Activated naive CD4-positive, alpha-beta T cell treated with anti-CD3 and anti-CD28 coated beads for 36 hours (primary cell): ENCODE measurements at regions of chr1 and their contacts with region 1.

Region 1: GRCh38 chr1:198520524-198521254 is 19.8 kb downstream of the ATP6V1G3 start:
- DNase-seq: peak; percentile 21
- H3K4me3 Mint-ChIP-seq: peak overlapping the region; percentile 75
- H3K27ac Mint-ChIP-seq: peak overlapping the region; percentile 92
- H3K4me1 Mint-ChIP-seq: peaks cover 57% of the 10 kb centered on the region
- H3K27me3 Mint-ChIP-seq: no peaks in the 10 kb centered on the region

Region 2: GRCh38 chr1:197775282-197776262 is 745.1 kb before region 1 on chr1 and contains the start of gene DENND1B:
- CTCF ChIA-PET with region 1: no interaction called
- intact Hi-C with region 1: loop called (anchors 2 kb)
- DNase-seq: peak; percentile 84
- H3K4me3 Mint-ChIP-seq: peak within 1 kb of the TSS; percentile 74
- H3K27ac Mint-ChIP-seq: peak within 1 kb of the TSS; percentile 99
- H3K4me1 Mint-ChIP-seq: peaks cover 64% of the 10 kb centered on the region
- H3K27me3 Mint-ChIP-seq: no peaks in the 10 kb centered on the region
- total RNA-seq, gene DENND1B: 8.9 to 9.7 TPM

Region 3: GRCh38 chr1:198497346-198498102 is 23.2 kb before region 1 on chr1:
- CTCF ChIA-PET with region 1: no interaction called
- intact Hi-C with region 1: loop called (anchors 1 kb)
- DNase-seq: no peak
- H3K4me3 Mint-ChIP-seq: no peak overlapping the region
- H3K27ac Mint-ChIP-seq: no peak overlapping the region
- H3K4me1 Mint-ChIP-seq: peaks cover 14% of the 10 kb centered on the region
- H3K27me3 Mint-ChIP-seq: no peaks in the 10 kb centered on the region

Region 4: GRCh38 chr1:198620951-198621824 is 100.5 kb after region 1 on chr1:
- CTCF ChIA-PET with region 1: interaction called, 4 read pairs
- intact Hi-C with region 1: loop called (anchors 1 kb)
- DNase-seq: peak; percentile 77
- H3K4me3 Mint-ChIP-seq: peak overlapping the region; percentile 82
- H3K27ac Mint-ChIP-seq: peak overlapping the region; percentile 100
- H3K4me1 Mint-ChIP-seq: peaks cover 86% of the 10 kb centered on the region
- H3K27me3 Mint-ChIP-seq: no peaks in the 10 kb centered on the region

Region 5: GRCh38 chr1:198749279-198749678 is 228.6 kb after region 1 on chr1:
- CTCF ChIA-PET with region 1: no interaction called
- intact Hi-C with region 1: loop called (anchors 2 kb)
- DNase-seq: no peak
- H3K4me3 Mint-ChIP-seq: no peak overlapping the region
- H3K27ac Mint-ChIP-seq: peak overlapping the region; percentile 9
- H3K4me1 Mint-ChIP-seq: peaks cover 16% of the 10 kb centered on the region
- H3K27me3 Mint-ChIP-seq: no peaks in the 10 kb centered on the region

Region 6: DNA sequence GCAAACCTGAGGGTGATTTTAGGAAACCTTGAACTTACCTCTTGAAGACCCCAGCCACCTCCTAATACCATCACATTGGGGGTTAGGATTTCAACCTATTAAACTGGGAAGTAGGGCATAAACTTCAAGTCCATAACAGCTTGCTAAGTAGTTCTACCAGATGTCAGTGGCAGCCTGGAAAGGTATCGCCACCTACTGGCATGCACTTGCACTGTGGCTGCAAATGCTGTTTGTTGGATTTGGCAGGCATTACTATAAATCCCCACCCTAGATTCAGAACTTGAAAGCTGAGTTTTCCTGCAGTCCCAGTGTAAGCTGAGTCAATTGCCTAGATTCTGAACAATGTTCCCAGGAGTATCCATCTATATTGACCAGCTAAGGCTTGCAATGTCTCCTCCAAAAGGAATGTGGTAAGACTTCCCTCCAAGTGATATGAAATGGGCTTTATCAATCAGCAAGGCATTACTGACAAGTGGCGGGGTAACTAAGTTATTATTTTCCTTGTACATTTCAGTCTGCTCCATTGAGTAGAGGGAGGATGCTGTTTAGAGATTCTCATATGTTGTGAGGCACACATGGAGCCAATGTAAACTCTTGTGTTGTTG is 592.7 kb after region 1 on chr1:
- CTCF ChIA-PET with region 1: no interaction called
- intact Hi-C with region 1: loop called (anchors 2 kb)
- DNase-seq: peak; percentile 87
- H3K4me3 Mint-ChIP-seq: no peak overlapping the region
- H3K27ac Mint-ChIP-seq: no peak overlapping the region
- H3K4me1 Mint-ChIP-seq: no peaks in the 10 kb centered on the region
- H3K27me3 Mint-ChIP-seq: no peaks in the 10 kb centered on the region

Region 7: DNA sequence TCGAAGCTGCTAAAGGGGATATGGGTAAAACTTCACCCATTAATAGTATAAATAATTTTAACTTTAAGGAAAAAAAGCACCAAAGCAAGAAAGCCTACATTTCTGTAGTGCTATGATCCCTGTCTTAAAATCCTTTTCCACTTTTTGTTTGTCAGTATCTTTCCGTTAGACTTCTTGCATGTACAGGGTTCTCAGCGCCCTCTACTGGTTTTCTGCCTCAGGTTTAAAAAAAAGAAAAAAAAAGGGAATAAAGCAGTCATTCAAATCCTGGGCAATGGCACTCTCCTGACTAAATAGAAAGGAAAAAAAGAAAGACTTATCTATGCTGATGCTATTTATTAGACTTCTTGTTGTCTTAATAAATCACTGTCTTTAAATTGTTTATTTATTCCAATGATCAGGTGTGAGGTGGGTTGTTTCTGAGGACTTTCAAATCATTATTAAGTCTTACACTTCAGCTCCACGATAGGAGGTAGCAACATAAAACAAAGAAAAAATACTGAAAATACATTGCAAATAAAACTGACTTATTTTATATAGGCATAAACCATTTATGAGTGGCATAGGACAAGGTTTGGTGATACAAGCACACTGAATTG is 1031.4 kb after region 1 on chr1:
- CTCF ChIA-PET with region 1: no interaction called
- intact Hi-C with region 1: loop called (anchors 5 kb)
- DNase-seq: peak; percentile 61
- H3K4me3 Mint-ChIP-seq: no peak overlapping the region
- H3K27ac Mint-ChIP-seq: no peak overlapping the region
- H3K4me1 Mint-ChIP-seq: no peaks in the 10 kb centered on the region
- H3K27me3 Mint-ChIP-seq: peaks cover 10% of the 10 kb centered on the region